ENCODE measurements at regions of chr20 and their contacts with region 1.

Region 1: GRCh38 chr20:49982346-49983122 is at the start of gene SNAI1:
- DNase-seq: peak; percentile 100
- H3K27ac ChIP-seq: no peak within 1 kb of the TSS
- CTCF ChIP-seq: peak; percentile 73

Region 2: DNA sequence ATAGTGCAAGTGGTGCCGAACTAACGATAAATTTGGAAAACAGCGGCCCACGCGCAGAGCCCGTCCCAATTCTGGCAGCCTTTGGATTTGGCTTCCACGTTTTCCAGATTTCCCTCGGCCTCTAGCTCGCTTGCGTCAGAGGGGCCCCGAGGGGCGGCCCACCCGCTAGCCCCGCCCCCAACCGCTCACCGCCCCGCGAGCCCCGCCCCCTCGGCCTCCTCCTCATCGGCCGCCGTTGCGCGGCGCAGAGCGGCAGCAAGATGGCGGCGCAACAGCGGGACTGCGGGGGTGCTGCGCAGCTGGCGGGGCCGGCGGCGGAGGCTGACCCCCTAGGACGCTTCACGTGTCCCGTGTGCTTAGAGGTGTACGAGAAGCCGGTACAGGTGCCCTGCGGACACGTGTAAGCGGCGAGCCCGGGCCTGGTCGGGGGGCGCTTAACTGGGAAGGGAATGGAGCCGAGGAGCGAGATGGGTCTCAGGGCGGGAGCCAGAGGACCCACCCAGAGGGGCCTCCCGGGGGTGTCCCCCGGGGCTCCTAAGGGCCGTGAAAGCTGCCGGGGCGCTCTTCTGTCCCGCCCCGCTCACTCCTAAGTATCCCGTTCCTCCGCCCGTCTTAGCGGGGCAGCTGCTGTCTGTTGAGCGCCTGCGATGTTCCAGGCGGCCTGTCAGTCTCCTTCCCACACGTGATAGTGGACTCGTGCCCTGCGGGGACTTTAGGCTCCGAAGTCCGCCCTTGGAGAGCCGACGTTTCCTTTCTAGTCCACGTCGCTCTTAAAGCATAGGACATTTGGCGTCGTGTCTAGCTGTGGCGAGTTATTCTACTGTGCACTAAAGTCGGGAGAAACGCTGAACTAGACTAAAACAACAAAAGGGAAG is 46.1 kb before region 1 on chr20 and contains the start of gene RNF114:
- CTCF ChIA-PET with region 1: interaction called, 20 read pairs
- POLR2A ChIA-PET with region 1: no interaction called
- DNase-seq: peak; percentile 100
- H3K27ac ChIP-seq: peak within 1 kb of the TSS; percentile 72
- CTCF ChIP-seq: no peak

Region 3: GRCh38 chr20:49964964-49965780 is 17.4 kb before region 1 on chr20:
- CTCF ChIA-PET with region 1: interaction called, 47 read pairs
- POLR2A ChIA-PET with region 1: no interaction called
- DNase-seq: peak; percentile 60
- H3K27ac ChIP-seq: no peak overlapping the region
- CTCF ChIP-seq: peak; percentile 62

Region 4: GRCh38 chr20:50020288-50020687 is 37.8 kb after region 1 on chr20:
- CTCF ChIA-PET with region 1: interaction called, 32 read pairs
- POLR2A ChIA-PET with region 1: interaction called, 7 read pairs
- DNase-seq: peak; percentile 91
- H3K27ac ChIP-seq: peak overlapping the region; percentile 81
- CTCF ChIP-seq: no peak

Region 5: DNA sequence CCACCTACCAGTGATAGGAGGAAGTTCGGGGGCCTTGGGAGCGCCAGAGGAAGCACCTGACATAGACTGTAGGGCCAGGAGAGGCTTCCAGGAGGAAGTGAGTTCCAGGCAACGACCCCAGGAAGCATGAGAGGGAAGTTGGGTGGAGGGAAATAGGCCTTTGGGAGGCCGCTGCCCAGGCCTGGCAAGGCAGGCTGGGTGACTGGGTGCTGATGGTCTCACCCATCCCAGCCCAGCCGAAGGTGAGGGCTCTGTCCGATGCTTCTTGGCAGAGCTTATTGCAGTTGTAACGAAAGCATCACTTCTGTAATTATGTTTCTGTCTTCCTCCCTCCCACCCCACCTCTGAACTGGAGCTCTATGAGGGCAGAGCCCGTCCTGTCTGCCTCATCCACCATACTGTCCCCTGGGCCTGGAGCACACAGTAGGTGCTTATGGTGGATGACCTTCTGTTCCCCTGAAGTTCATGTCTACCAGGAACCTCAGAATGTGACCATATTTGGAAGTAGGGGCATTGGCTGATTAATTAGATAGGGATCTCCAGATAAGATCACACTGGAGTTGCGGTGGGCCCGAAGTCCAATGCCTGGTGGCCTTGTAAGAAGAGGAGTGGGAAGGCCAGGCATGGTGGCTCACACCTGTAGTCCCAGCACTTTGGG is 76.3 kb after region 1 on chr20:
- CTCF ChIA-PET with region 1: interaction called, 36 read pairs
- POLR2A ChIA-PET with region 1: no interaction called
- DNase-seq: no peak
- H3K27ac ChIP-seq: no peak overlapping the region
- CTCF ChIP-seq: no peak

Region 6: GRCh38 chr20:50085452-50086365 is 103.2 kb after region 1 on chr20:
- CTCF ChIA-PET with region 1: interaction called, 53 read pairs
- POLR2A ChIA-PET with region 1: no interaction called
- DNase-seq: peak; percentile 86
- H3K27ac ChIP-seq: peak overlapping the region; percentile 70
- CTCF ChIP-seq: peak; percentile 98

Region 7: GRCh38 chr20:50138479-50139393 is 156.2 kb after region 1 on chr20:
- CTCF ChIA-PET with region 1: interaction called, 11 read pairs
- POLR2A ChIA-PET with region 1: no interaction called
- DNase-seq: no peak
- H3K27ac ChIP-seq: peak overlapping the region; percentile 98
- CTCF ChIP-seq: no peak

Measured in RWPE1 (cell line).